Caki2 (cell line): ENCODE measurements at regions of chr7 and their contacts with region 1.

Region 1: DNA sequence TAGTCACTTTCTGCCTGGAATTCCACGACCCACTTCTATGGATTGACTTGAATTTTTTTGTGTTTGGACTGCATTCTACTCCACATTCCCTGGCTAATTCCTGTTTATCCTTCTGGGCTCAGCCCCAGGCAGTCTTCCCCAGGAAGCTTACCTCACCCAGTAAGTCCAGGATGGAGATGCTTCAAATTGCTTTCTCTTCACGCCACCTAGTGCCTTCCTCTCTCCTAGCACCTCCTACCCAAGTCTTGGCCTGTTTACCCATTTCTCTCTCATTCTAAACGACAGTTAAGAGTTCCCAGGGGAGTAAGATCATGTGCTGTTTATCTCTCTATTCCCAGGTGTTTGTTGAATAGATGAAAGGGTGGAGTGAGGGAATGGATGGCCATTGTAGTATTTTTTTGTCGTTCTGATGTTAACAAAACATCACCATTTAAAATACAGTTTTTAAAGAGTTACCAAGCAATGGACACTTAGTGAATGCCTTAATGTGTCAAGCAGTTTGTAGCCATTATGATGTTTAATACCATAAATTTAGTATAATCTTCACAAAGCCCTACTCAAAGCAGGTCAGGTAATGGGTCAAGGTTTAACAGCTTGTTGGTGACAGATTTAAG is 45.5 kb upstream of the TARP start:
- DNase-seq: peak; percentile 76

Region 2: GRCh38 chr7:37916673-37917660 is 401.9 kb before region 1 on chr7 and contains the start of gene SFRP4:
- in situ Hi-C with region 1: loop called (anchors 25 kb)
- DNase-seq: peak; percentile 87
- total RNA-seq, gene SFRP4: 19.2 and 19.4 TPM in 2 replicates

Region 3: GRCh38 chr7:38107486-38107893 is 211.4 kb before region 1 on chr7:
- in situ Hi-C with region 1: loop called (anchors 10 kb)
- DNase-seq: peak; percentile 53

Region 4: GRCh38 chr7:38222481-38223096 is 96.3 kb before region 1 on chr7:
- in situ Hi-C with region 1: no loop called
- DNase-seq: peak; percentile 51

Region 5: GRCh38 chr7:38374507-38374906 is 55.6 kb after region 1 on chr7:
- in situ Hi-C with region 1: no loop called
- DNase-seq: no peak

Region 6: DNA sequence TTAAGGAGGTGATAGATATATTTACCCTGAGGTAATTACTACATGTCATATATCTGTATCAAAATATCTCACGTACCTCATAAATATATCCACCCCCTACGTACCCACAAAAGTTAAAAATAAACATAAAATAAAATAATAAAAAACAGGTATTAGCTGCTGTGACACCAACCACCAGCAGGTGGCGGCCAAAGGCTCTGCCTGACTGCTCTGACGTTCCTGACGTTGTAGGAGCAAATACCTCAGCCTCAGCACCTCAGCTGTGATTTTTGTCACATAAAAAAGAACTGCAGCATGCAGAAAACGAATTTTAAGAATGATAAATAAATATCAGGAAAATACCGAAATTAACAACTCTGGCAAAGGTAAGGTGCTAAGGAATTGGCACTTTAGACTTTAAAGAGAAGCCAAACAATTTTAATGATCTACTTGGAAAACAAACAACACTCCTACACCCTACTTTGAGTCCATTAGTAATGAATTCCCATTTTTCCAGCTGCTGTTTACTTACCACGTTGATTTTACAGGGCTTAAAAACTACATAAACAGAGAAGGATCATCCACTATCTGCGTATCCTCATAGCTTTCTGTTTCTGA is 79.9 kb after region 1 on chr7:
- in situ Hi-C with region 1: no loop called
- DNase-seq: peak; percentile 17

Region 7: DNA sequence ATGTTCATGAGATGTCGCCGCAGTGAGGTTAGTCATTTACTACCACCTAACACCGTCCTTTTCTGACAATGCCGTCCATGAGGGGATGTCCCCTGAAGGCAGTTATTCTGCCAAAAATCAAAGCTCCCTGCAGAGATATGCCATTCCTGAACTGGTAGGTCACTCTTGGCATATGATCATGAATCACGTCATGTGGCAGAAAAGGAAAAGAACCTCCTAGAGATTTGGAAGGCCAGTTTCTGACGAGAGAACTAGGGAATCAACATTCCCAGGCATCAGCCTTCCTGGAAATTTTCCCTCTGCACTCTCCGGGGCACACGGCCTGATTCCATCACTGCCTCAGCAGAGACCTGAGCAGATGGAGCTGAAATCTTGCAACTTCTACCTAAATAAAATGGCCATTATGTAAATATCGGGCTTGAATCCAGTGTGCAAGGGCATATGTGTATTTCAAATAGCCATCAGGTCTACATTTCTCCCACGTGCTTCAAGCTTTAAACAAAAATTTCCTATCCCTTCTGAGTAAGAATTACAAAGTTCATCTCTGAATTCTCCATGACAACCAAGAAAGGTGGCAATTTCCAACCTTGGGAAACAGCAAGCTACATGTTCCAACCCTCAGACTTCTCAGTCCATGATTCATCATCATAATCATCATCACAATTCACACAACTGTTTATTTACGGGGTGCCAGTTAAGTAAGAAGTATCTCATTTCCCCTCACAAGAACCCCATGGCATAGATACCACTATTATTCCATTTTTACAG is 265.7 kb after region 1 on chr7:
- in situ Hi-C with region 1: no loop called
- DNase-seq: peak; percentile 39